ENCODE measurements at regions of chr20 and their contacts with region 1.

Region 1: DNA sequence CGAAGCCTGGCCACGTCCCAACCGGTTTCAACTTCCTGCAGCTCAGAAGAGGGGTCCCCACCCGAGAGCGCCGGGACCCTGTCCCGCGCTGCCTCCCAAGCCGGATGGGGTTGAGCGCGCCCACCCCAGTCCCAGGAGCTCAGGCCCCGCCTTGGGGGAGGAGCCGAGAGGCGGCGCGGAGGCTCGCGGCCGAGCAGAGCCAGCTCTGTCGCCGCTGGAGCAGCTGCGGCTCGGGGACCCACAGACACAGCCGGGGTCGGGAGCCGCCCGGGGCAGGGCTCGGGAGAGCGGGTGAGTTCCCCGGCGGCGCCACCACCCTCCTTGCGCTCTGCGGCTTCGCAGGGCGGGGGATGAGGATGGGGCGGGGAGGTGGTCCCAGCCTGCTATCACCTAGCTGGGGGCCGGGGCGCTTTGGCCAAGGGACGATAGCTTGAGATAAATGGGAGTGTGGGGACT is at the start of gene PPP1R16B:
- DNase-seq: peak; percentile 62 to 83 (median 74)
- ATAC-seq: peak; percentile 72
- H3K4me3 ChIP-seq: peak within 1 kb of the TSS; percentile 86
- H3K4me3 Mint-ChIP-seq: peak within 1 kb of the TSS; percentile 81 to 95 (median 92)
- H3K27ac ChIP-seq: peak within 1 kb of the TSS; percentile 99
- H3K27ac Mint-ChIP-seq: peak within 1 kb of the TSS; percentile 85 to 100 (median 97)
- H3K4me1 ChIP-seq: peaks cover 33 to 47% of the 10 kb centered on the region in 2 donors
- H3K4me1 Mint-ChIP-seq: peaks cover 36 to 58% (median 53%) of the 10 kb centered on the region in 7 donors
- H3K27me3 ChIP-seq: no peaks in the 10 kb centered on the region
- H3K27me3 Mint-ChIP-seq: peaks cover 0 to 3% (median 0%) of the 10 kb centered on the region in 5 donors
- total RNA-seq, gene PPP1R16B: 20.8 to 75.4 (median 22.0) TPM

Region 2: GRCh38 chr20:38350800-38351775 is 454.4 kb before region 1 on chr20:
- CTCF ChIA-PET with region 1: no interaction called
- POLR2A ChIA-PET with region 1: no interaction called
- intact Hi-C with region 1: no loop called
- DNase-seq: no peak
- ATAC-seq: no peak
- H3K4me3 ChIP-seq: no peak overlapping the region
- H3K4me3 Mint-ChIP-seq: no peak overlapping the region
- H3K27ac ChIP-seq: no peak overlapping the region
- H3K27ac Mint-ChIP-seq: no peak overlapping the region
- H3K4me1 ChIP-seq: no peaks in the 10 kb centered on the region
- H3K4me1 Mint-ChIP-seq: no peaks in the 10 kb centered on the region
- H3K27me3 ChIP-seq: no peaks in the 10 kb centered on the region
- H3K27me3 Mint-ChIP-seq: peaks cover 0 to 7% (median 0%) of the 10 kb centered on the region in 5 donors

Region 3: DNA sequence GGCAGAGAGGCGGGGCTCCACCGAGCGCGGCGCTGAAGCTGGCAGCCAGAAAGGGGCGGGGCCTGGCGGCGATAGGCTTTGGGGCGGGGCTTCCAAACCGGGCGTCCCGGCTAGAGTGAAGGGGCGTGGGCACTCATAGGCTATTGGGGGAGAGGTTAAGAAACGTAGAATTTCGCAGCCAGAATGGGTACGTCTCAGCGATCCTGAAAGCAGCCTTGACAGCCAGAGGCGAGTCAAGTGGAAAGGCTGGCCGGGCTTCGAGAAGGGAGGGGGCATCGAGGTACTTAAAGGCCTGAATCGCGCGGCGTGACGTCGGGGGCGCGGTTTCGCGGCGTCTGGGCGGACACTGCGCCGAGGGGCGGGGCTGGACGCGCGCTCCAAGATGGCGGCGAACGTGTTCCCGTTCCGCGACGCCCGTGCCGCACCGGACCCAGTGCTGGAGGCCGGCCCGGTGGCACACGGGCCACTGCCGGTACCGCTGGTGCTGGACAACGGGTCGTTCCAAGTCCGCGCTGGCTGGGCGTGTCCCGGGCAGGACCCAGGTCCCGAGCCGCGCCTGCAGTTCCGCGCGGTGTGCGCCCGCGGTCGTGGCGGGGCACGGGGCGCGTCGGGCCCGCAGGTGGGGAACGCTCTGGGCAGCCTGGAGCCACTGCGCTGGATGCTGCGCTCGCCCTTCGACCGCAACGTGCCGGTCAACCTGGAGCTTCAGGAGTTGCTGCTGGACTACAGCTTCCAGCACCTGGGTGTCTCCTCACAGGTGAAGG is 57.3 kb before region 1 on chr20 and contains the start of gene ACTR5:
- CTCF ChIA-PET with region 1: interaction called, 4 read pairs
- POLR2A ChIA-PET with region 1: interaction called, 25 read pairs
- intact Hi-C with region 1: loop called (anchors 1 kb)
- DNase-seq: peak; percentile 95 to 99 (median 98)
- ATAC-seq: peak; percentile 96
- H3K4me3 ChIP-seq: peak within 1 kb of the TSS; percentile 72
- H3K4me3 Mint-ChIP-seq: peak within 1 kb of the TSS; percentile 95 to 99 (median 97)
- H3K27ac ChIP-seq: peak within 1 kb of the TSS; percentile 95
- H3K27ac Mint-ChIP-seq: peak within 1 kb of the TSS; percentile 93 to 100 (median 99)
- H3K4me1 ChIP-seq: peaks cover 12 to 13% of the 10 kb centered on the region in 2 donors
- H3K4me1 Mint-ChIP-seq: peaks cover 11 to 40% (median 22%) of the 10 kb centered on the region in 7 donors
- H3K27me3 ChIP-seq: no peaks in the 10 kb centered on the region
- H3K27me3 Mint-ChIP-seq: peaks cover 4 to 13% (median 5%) of the 10 kb centered on the region in 5 donors
- total RNA-seq, gene ACTR5: 8.9 to 20.8 (median 15.2) TPM

Region 4: DNA sequence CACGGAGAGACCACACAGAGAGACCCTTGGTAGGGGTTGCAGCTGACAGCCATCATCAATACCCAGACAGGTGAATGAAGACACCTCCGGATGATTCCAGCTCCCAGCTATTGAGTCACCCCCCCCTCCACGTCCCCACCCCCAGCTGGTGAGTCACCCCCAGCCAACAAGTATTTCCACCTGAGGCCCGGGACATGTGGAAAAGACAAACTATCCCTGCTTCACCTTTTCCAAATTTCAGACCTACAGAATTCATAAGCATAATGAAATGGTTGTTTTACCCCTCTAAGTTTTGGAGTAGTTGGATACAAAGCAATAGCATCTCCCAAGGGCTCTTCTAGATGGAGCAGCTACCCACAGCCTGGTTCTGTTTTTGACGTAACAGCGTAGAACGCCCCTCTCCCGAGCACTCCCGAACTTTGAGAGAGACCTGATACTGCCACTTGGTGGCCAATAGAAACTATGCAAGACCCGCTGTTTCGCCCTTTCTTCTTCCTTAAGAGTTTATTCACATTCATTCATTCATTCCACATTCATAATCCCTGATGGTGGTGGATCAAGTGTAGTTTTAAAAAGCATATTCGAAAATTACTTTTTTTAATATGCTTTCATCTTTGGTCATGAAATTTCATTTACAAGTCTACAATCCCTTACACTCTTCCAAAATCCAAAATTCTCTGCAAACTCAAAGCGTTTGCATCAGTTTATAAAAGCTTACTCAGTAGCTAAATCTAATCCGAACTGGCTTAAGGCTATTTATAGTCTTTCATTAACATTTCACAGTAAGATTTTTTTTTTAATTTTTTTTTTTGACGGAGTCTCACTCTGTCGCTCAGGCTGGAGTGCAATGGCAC is 15.1 kb before region 1 on chr20:
- CTCF ChIA-PET with region 1: interaction called, 4 read pairs
- POLR2A ChIA-PET with region 1: interaction called, 3 read pairs
- intact Hi-C with region 1: loop called (anchors 1 to 2 kb)
- DNase-seq: peak in 4 of 9 donors; percentile 20 to 63 (median 40)
- ATAC-seq: peak; percentile 60
- H3K4me3 ChIP-seq: no peak overlapping the region
- H3K4me3 Mint-ChIP-seq: peak overlapping the region in 5 of 10 donors; percentile 5 to 37 (median 15)
- H3K27ac ChIP-seq: no peak overlapping the region
- H3K27ac Mint-ChIP-seq: peak overlapping the region in 6 of 9 donors; percentile 2 to 90 (median 64)
- H3K4me1 ChIP-seq: peaks cover 0 to 4% of the 10 kb centered on the region in 2 donors
- H3K4me1 Mint-ChIP-seq: peaks cover 0 to 15% (median 9%) of the 10 kb centered on the region in 7 donors
- H3K27me3 ChIP-seq: no peaks in the 10 kb centered on the region
- H3K27me3 Mint-ChIP-seq: no peaks in the 10 kb centered on the region

Region 5: GRCh38 chr20:38842558-38842981 is 37.0 kb after region 1 on chr20:
- CTCF ChIA-PET with region 1: interaction called, 3 read pairs
- POLR2A ChIA-PET with region 1: interaction called, 6 read pairs
- intact Hi-C with region 1: loop called (anchors 1 kb)
- DNase-seq: no peak
- ATAC-seq: peak; percentile 58
- H3K4me3 ChIP-seq: no peak overlapping the region
- H3K4me3 Mint-ChIP-seq: peak overlapping the region; percentile 20 to 74 (median 58)
- H3K27ac ChIP-seq: peak overlapping the region; percentile 64
- H3K27ac Mint-ChIP-seq: peak overlapping the region; percentile 67 to 94 (median 88)
- H3K4me1 ChIP-seq: peaks cover 43 to 72% of the 10 kb centered on the region in 2 donors
- H3K4me1 Mint-ChIP-seq: peaks cover 44 to 80% (median 74%) of the 10 kb centered on the region in 7 donors
- H3K27me3 ChIP-seq: no peaks in the 10 kb centered on the region
- H3K27me3 Mint-ChIP-seq: no peaks in the 10 kb centered on the region

Region 6: DNA sequence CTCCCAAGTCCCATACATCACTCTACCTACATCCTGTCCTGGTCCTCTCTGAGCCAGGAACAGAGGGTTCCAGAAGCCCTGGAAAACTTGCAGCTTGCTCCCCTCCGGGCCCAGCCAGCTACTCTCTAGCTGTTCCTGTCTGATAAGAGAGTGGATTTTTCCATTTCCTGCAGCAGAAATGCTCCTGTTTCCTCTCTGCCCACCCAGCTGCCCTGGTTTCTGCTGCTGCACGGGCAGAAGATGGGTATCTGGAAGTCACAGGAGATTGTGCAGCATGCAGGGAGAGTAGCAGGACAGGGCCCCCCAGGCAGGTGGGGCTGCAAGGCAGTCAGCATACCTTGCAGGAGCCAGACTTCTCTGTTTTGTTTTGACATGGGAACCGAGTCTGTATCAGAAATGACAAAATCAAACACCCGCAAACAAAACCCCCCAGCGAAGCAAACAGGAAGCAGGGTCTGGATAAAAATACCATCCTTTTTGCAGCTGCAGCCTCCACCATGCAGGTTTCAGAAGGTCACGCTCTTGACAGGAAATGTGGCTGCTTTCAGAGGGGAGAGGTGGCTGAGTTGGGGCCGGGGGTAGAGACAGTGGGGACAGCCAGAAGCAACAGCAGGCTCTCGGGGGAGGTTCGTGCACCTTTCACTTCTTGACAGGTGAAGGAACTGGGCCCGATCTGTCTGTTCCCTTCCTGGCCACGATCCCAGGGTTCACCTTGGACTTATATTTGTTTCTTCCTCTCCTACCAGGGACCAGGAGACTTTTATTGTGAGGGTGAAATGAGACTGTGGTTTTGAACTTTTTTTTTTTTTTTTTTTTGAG is 69.9 kb after region 1 on chr20:
- CTCF ChIA-PET with region 1: interaction called, 10 read pairs
- POLR2A ChIA-PET with region 1: interaction called, 50 read pairs
- intact Hi-C with region 1: loop called (anchors 1 kb)
- DNase-seq: peak in 8 of 9 donors; percentile 28 to 56 (median 52)
- ATAC-seq: peak; percentile 69
- H3K4me3 ChIP-seq: peak overlapping the region; percentile 46
- H3K4me3 Mint-ChIP-seq: peak overlapping the region; percentile 75 to 94 (median 86)
- H3K27ac ChIP-seq: peak overlapping the region; percentile 65
- H3K27ac Mint-ChIP-seq: peak overlapping the region; percentile 84 to 94 (median 92)
- H3K4me1 ChIP-seq: peaks cover 46 to 66% of the 10 kb centered on the region in 2 donors
- H3K4me1 Mint-ChIP-seq: peaks cover 64 to 91% (median 79%) of the 10 kb centered on the region in 7 donors
- H3K27me3 ChIP-seq: no peaks in the 10 kb centered on the region
- H3K27me3 Mint-ChIP-seq: no peaks in the 10 kb centered on the region

Region 7: GRCh38 chr20:38926142-38926933 is 120.8 kb after region 1 on chr20 and contains the start of gene FAM83D:
- CTCF ChIA-PET with region 1: no interaction called
- POLR2A ChIA-PET with region 1: no interaction called
- intact Hi-C with region 1: loop called in 1 of 2 experiments (anchors 1 kb)
- DNase-seq: peak; percentile 86 to 98 (median 92)
- ATAC-seq: peak; percentile 97
- H3K4me3 ChIP-seq: peak within 1 kb of the TSS; percentile 61
- H3K4me3 Mint-ChIP-seq: peak within 1 kb of the TSS; percentile 76 to 90 (median 80)
- H3K27ac ChIP-seq: peak within 1 kb of the TSS; percentile 64
- H3K27ac Mint-ChIP-seq: peak within 1 kb of the TSS in 8 of 9 donors; percentile 27 to 83 (median 72)
- H3K4me1 ChIP-seq: peaks cover 5 to 22% of the 10 kb centered on the region in 2 donors
- H3K4me1 Mint-ChIP-seq: peaks cover 6 to 43% (median 17%) of the 10 kb centered on the region in 7 donors
- H3K27me3 ChIP-seq: no peaks in the 10 kb centered on the region
- H3K27me3 Mint-ChIP-seq: no peaks in the 10 kb centered on the region
- total RNA-seq, gene FAM83D: 1.4 to 11.1 (median 1.8) TPM

Region 8: DNA sequence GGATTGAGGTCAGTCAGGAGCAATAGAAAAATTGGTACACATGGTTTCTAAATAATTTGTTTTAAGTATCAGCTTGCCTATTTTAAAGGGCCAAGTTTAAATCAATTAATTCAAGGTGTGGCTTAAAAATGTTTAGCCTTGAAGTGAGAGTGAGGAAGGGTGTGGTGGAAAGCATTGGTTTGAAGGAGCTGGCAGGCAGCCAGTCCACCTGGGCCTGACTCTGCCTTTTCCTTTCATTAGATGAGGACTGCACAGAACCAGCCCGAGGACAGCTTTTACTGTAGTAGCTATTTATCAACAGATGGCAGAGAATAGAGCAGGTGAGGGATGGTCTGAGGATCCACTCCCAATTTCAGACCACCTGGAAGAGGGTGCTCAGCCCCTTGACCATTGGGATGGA is 199.0 kb after region 1 on chr20:
- CTCF ChIA-PET with region 1: no interaction called
- POLR2A ChIA-PET with region 1: no interaction called
- intact Hi-C with region 1: no loop called
- DNase-seq: peak in 6 of 9 donors; percentile 11 to 51 (median 36)
- ATAC-seq: peak; percentile 50
- H3K4me3 ChIP-seq: no peak overlapping the region
- H3K4me3 Mint-ChIP-seq: peak overlapping the region in 4 of 10 donors; percentile 45 to 58 (median 48)
- H3K27ac ChIP-seq: no peak overlapping the region
- H3K27ac Mint-ChIP-seq: peak overlapping the region in 6 of 9 donors; percentile 25 to 84 (median 57)
- H3K4me1 ChIP-seq: peaks cover 0 to 11% of the 10 kb centered on the region in 2 donors
- H3K4me1 Mint-ChIP-seq: peaks cover 14 to 42% (median 32%) of the 10 kb centered on the region in 7 donors
- H3K27me3 ChIP-seq: no peaks in the 10 kb centered on the region
- H3K27me3 Mint-ChIP-seq: no peaks in the 10 kb centered on the region

Region 9: GRCh38 chr20:39176457-39176856 is 370.9 kb after region 1 on chr20:
- CTCF ChIA-PET with region 1: no interaction called
- POLR2A ChIA-PET with region 1: no interaction called
- intact Hi-C with region 1: no loop called
- DNase-seq: no peak
- ATAC-seq: no peak
- H3K4me3 ChIP-seq: no peak overlapping the region
- H3K4me3 Mint-ChIP-seq: no peak overlapping the region
- H3K27ac ChIP-seq: no peak overlapping the region
- H3K27ac Mint-ChIP-seq: no peak overlapping the region
- H3K4me1 ChIP-seq: no peaks in the 10 kb centered on the region
- H3K4me1 Mint-ChIP-seq: no peaks in the 10 kb centered on the region
- H3K27me3 ChIP-seq: no peaks in the 10 kb centered on the region
- H3K27me3 Mint-ChIP-seq: peaks cover 4 to 44% (median 13%) of the 10 kb centered on the region in 5 donors